ENCODE measurements at regions of chr1 and their contacts with region 1.

Region 1: DNA sequence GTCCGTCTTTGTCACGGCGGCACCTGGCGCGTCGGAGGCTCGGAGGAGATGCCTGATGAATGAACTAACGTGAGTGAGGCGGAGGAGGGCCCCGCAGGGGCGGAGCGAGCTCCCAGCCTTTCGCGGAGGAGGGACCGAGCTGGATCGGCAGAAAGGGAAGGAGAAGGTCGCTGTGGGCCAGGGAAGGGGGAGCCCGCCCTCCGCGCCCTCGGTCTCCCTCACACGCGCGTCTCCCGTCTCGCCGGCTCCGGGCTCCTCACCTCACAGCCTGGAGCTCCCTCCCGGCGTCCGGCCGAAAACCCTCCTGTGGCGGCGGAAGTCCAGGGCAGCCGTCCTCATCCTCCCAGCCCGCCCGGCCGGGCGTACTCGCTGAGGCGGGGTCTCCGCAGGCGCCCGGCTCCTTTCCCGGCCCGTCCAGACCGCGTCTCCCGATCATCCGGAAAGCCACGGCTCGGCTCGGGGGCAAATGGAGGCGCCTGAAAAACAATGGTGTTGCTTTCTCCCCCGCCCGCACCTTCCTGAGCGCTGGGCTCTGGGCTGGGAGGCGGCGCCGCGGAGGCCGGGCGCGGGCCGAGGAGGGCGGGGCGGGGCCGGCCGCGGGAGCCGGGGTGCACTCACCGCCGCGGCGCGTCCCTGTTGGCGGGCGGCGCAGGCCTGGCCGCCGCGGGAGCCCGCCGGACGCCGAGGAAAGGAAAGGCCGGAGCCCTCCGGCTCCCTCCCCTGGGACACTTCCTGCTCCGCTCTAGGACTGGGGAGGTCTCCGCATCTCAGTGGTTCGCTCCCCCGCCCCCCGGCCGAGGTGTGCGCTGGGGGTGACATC is at the start of gene ZNF496:
- DNase-seq: peak; percentile 59
- ATAC-seq: peak; percentile 73
- H3K4me3 Mint-ChIP-seq: peak within 1 kb of the TSS; percentile 89
- H3K27ac Mint-ChIP-seq: peak within 1 kb of the TSS; percentile 59
- H3K4me1 Mint-ChIP-seq: peaks cover 23% of the 10 kb centered on the region
- H3K27me3 Mint-ChIP-seq: no peaks in the 10 kb centered on the region
- CTCF ChIP-seq: no peak
- total RNA-seq, gene ZNF496: 15.0 and 21.2 TPM in 2 replicates

Region 2: DNA sequence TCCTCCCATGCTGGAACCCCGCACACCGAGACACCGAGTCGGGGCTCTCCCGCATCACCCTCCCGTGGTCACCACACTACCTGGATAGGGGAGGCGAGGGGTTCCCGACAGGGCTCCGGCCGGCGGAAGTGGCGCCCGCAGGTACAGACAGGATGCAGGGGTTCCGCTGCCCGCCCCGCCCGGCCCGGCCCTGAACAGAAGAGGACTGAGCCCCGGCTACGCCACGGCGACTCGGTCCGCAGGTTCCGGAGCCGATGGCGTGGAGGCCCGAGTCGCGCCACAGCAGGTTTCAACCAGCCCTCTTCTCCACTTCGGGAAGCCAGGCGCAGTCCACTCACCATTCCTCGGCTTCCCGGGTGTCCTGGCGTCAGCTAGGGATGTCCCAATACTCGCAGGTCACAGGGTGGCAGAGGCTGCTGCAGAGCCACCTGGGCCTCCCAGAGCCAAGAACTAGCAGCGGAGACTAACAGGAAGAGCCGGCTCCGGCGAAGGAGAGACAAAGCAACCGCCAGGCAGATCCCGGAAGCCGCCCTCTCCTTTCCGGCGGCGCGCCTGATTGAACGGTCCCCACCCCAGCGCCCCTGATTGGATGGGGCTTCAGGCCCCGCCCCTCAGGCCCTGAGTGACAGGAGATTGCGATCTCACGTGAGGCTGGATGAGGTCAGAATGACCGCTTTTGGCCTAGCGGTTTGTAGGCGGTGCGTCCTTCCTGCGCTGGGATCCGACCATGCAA is 227.4 kb before region 1 on chr1 and contains the start of gene ZNF669:
- CTCF ChIA-PET with region 1: no interaction called
- POLR2A ChIA-PET with region 1: interaction called, 3 read pairs
- intact Hi-C with region 1: loop called (anchors 1 kb)
- DNase-seq: peak; percentile 89
- ATAC-seq: peak; percentile 98
- H3K4me3 Mint-ChIP-seq: peak within 1 kb of the TSS; percentile 96
- H3K27ac Mint-ChIP-seq: peak within 1 kb of the TSS; percentile 90
- H3K4me1 Mint-ChIP-seq: peaks cover 21% of the 10 kb centered on the region
- H3K27me3 Mint-ChIP-seq: peaks cover 23% of the 10 kb centered on the region
- CTCF ChIP-seq: no peak
- total RNA-seq, gene ZNF669: 17.5 and 18.0 TPM in 2 replicates

Region 3: GRCh38 chr1:247347477-247348222 is 16.3 kb after region 1 on chr1:
- CTCF ChIA-PET with region 1: no interaction called
- POLR2A ChIA-PET with region 1: no interaction called
- intact Hi-C with region 1: no loop called
- DNase-seq: no peak
- ATAC-seq: peak; percentile 28
- H3K4me3 Mint-ChIP-seq: no peak overlapping the region
- H3K27ac Mint-ChIP-seq: no peak overlapping the region
- H3K4me1 Mint-ChIP-seq: peaks cover 7% of the 10 kb centered on the region
- H3K27me3 Mint-ChIP-seq: peaks cover 16% of the 10 kb centered on the region
- CTCF ChIP-seq: no peak

Measured in activated B cell treated with CpG ODN at 0.5 μM for 24 hours (primary cell).